GM12878 (cell line): ENCODE measurements at regions of chr11 and their contacts with region 1.

Region 1: DNA sequence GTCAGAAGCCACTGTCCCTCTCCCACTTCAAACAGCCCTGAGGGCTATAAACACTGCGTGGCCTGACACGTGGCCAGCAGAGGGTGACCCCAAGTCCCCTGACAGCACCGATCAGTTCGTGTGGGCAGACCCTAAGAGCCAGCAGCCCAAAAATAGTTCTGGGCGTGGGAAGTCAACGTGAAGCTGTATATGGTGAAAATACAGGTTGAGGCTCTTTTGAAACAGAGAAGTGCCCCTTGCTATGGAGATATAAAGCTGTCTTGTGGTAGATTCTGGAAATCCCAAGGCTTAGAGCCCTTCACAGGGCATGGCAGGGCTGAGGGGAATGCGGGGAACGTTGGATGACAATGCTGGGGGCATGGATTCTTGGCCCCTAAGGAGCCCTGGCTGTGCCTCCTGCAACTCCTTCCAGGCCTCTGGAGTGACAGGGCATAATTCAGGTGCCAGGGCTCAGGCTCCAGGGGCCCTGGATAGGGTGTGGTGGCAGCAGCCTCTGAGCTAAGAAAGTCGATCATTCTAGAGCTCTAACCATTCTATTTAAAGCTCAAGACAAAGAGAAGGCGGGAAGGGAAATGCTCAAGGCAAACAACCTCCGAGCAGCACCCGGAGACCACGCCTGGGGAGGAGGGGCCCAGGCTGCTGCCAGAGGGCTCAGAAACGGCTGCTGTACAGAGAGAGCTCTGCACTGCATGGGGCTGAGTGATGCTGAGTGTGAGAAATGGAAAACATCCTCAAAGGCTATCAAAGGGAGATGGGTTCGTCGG is 60.4 kb upstream of the CD5 start:
- DNase-seq: no peak
- ATAC-seq: peak; percentile 89
- H3K4me3 ChIP-seq: peak overlapping the region; percentile 51; the same call in 1 of the 2 replicates
- H3K27ac ChIP-seq: peak overlapping the region; percentile 77
- H3K4me1 ChIP-seq: peaks cover 15% of the 10 kb centered on the region
- H3K27me3 ChIP-seq: no peaks in the 10 kb centered on the region
- CTCF ChIP-seq: no peak
- EP300 ChIP-seq: peak in 1 of 2 experiments; percentile 26; a peak in 2 of 4 replicates
- POLR2A ChIP-seq: peak; percentile 79
- RAD21 ChIP-seq: no peak; the same call in 1 of the 2 replicates

Region 2: GRCh38 chr11:60951899-60952741 is 89.8 kb before region 1 on chr11 and contains the start of gene SLC15A3:
- CTCF ChIA-PET with region 1: interaction called, 4 read pairs
- POLR2A ChIA-PET with region 1: interaction called, 14 read pairs
- RAD21 ChIA-PET with region 1: interaction called, 13 read pairs
- SMC1A ChIA-PET with region 1: interaction called, 11 read pairs
- in situ Hi-C with region 1: no loop called
- intact Hi-C with region 1: no loop called
- DNase-seq: peak; percentile 61
- ATAC-seq: peak; percentile 88
- H3K4me3 ChIP-seq: peak within 1 kb of the TSS; percentile 94
- H3K27ac ChIP-seq: peak within 1 kb of the TSS; percentile 97
- H3K4me1 ChIP-seq: peaks cover 28% of the 10 kb centered on the region
- H3K27me3 ChIP-seq: no peaks in the 10 kb centered on the region
- CTCF ChIP-seq: no peak
- EP300 ChIP-seq: 0 out of 4 replicates have a peak, but pooled peaks of 1 of the 2 experiments have one; percentile 23
- POLR2A ChIP-seq: peak; percentile 85
- RAD21 ChIP-seq: no peak
- polyA plus RNA-seq, gene SLC15A3: 17.7 to 55.4 TPM

Region 3: DNA sequence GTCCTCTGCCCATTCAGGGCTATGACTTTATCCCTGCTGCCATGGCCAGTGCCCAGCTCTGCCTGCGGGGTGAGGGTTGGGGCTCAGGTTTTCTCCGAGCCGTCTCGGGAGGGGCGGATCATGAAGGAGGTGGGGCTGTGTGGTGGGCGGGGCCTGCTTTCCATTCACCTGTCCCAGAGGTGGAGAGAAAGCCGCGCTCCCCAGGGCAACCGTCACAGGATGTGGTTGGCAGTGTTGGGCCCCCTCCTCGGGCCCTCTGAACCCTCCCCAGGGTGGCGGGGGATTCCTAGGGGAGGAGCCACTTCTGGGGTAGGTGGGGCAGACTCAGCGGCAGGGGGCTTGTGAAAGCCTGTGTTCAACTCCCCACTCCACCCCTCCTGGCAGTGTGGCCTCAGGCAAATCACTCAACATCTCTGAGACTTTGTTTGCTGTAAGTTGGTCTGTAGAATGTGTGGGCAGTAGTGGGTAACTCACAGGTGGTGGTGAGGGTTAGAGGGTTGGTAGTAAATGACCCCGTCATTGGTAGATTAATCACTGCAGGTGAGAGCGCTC is 20.2 kb before region 1 on chr11:
- CTCF ChIA-PET with region 1: interaction called, 4 read pairs
- POLR2A ChIA-PET with region 1: interaction called, 4 read pairs
- RAD21 ChIA-PET with region 1: interaction called, 9 read pairs
- SMC1A ChIA-PET with region 1: interaction called, 31 read pairs
- in situ Hi-C with region 1: no loop called
- intact Hi-C with region 1: no loop called
- DNase-seq: no peak
- ATAC-seq: peak; percentile 70
- H3K4me3 ChIP-seq: no peak overlapping the region
- H3K27ac ChIP-seq: no peak overlapping the region
- H3K4me1 ChIP-seq: peaks cover 22% of the 10 kb centered on the region
- H3K27me3 ChIP-seq: no peaks in the 10 kb centered on the region
- CTCF ChIP-seq: no peak
- EP300 ChIP-seq: no peak
- POLR2A ChIP-seq: no peak
- RAD21 ChIP-seq: no peak

Region 4: DNA sequence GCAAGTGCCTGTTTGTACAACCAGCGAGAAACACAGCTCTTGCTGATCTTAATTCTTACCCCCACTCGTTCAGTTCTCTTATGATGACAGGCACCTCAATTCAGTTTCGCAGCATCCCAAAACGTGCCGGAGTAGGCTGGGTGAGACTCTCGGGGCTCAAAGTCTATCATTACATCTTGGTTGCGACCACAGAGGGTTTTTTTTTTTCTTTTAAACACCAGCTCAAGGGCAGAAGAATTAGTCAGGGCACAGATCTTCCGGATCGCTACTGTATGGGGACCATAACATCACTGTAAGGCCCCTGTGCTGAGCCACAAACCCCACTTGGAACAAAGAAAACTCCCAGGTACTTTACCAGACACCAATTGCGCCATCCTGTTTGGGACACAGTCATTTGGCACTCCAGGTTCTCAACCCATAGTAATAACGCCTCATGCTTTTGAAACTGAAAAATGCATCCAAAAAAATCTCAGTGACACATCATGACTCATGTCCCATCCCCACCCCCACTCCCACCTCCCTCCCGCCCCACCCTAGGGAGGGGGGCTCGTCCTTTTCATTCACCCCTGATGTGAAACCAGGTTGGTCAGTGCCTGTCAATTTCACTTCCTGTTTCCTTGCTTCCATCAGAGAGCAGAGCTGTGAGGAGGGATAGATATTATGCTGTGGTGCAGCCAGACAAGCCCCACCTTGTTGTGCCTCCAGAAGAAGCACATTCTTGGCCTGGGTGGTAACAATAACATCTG is 19.3 kb after region 1 on chr11:
- CTCF ChIA-PET with region 1: interaction called, 25 read pairs
- POLR2A ChIA-PET with region 1: interaction called, 10 read pairs
- RAD21 ChIA-PET with region 1: interaction called, 65 read pairs
- SMC1A ChIA-PET with region 1: interaction called, 98 read pairs
- in situ Hi-C with region 1: no loop called
- intact Hi-C with region 1: loop called (anchors 2 kb)
- DNase-seq: peak; percentile 97
- ATAC-seq: peak; percentile 90
- H3K4me3 ChIP-seq: peak overlapping the region; percentile 48; the same call in 1 of the 2 replicates
- H3K27ac ChIP-seq: peak overlapping the region; percentile 84
- H3K4me1 ChIP-seq: peaks cover 30% of the 10 kb centered on the region
- H3K27me3 ChIP-seq: no peaks in the 10 kb centered on the region
- CTCF ChIP-seq: no peak
- EP300 ChIP-seq: peak; percentile 91 to 99
- POLR2A ChIP-seq: peak; percentile 43; the same call in 1 of the 2 replicates
- RAD21 ChIP-seq: peak; percentile 27

Region 5: DNA sequence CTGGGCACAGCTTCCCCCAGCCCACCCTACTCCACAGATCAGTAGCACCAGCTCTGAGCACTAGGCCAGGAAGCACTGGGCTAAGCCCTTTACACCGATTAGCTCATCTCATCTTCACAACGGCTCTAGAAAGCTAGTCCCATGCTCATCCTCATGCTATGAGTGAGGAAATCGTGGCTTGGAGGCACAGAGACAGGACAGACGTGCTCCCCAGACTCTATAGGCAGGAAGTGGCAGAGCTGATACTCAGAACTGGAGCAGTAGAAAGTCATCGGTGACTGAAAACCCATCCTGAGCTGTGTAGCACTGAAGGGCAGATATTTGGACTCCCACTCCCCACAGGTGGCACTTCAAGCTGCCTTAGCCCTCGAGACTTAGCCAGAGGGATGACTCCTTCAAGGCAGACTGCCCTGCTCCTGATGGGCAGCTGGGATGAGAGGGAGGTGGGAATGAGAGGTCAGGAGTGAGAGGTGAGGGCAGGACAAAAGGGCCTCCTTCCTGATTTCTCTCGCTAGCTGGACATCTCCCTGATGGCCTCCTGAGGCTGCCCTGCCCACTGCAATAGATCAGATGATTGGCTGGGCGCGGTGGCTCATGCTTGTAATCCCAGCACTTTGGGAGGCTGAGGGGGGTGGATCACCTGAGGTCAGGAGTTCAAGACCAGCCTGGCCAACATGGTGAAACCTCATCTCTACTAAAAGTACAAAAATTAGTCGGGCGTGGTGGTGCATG is 70.0 kb after region 1 on chr11:
- CTCF ChIA-PET with region 1: interaction called, 3 read pairs
- POLR2A ChIA-PET with region 1: no interaction called
- RAD21 ChIA-PET with region 1: no interaction called
- SMC1A ChIA-PET with region 1: interaction called, 10 read pairs
- in situ Hi-C with region 1: no loop called
- intact Hi-C with region 1: no loop called
- DNase-seq: no peak
- ATAC-seq: peak; percentile 57
- H3K4me3 ChIP-seq: no peak overlapping the region
- H3K27ac ChIP-seq: no peak overlapping the region
- H3K4me1 ChIP-seq: peaks cover 9% of the 10 kb centered on the region
- H3K27me3 ChIP-seq: no peaks in the 10 kb centered on the region
- CTCF ChIP-seq: no peak
- EP300 ChIP-seq: no peak
- POLR2A ChIP-seq: no peak
- RAD21 ChIP-seq: no peak